MCF 10A (cell line): ENCODE measurements at regions of chr11 and their contacts with region 1.

Region 1: DNA sequence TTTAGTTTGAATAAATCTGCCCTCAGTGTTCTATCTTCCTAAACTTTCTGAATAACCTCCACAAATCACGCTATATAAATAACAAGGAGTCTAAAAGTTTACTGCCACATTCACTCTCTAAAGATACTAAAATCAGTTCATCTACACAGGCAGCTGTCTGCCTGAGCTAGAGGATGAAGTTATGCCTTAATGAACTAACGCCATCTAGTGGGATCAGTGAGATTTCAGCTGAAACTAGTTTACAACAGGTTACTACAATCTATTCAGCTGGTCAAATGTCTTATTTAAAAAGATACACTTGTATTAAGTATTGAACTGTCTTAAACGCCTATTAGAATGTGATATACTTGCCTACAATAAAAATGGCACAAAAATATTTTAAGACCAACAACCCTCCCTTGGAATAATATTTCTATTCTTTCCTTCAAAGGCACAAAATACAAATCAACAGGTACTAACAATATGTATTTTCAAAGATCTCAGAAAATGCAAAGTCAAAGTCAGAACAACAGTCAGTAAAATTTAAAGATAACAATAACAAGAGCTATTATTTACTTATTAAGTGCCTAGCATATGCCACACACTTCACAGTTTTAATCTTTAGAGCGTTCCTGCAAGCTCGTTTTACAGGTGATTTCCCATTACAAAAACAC is 84.1 kb downstream of the LARGE2 start:
- DNase-seq: peak; percentile 74
- H3K4me3 Mint-ChIP-seq: no peak overlapping the region
- H3K27ac Mint-ChIP-seq: no peak overlapping the region
- H3K4me1 Mint-ChIP-seq: peaks cover 12% of the 10 kb centered on the region
- H3K27me3 Mint-ChIP-seq: no peaks in the 10 kb centered on the region
- CTCF ChIP-seq: peak; percentile 69

Region 2: GRCh38 chr11:45872513-45873356 is 133.8 kb before region 1 on chr11:
- CTCF ChIA-PET with region 1: interaction called, 7 read pairs
- POLR2A ChIA-PET with region 1: interaction called, 4 read pairs
- intact Hi-C with region 1: loop called (anchors 1 kb)
- DNase-seq: peak; percentile 75
- H3K4me3 Mint-ChIP-seq: no peak overlapping the region
- H3K27ac Mint-ChIP-seq: no peak overlapping the region
- H3K4me1 Mint-ChIP-seq: no peaks in the 10 kb centered on the region
- H3K27me3 Mint-ChIP-seq: no peaks in the 10 kb centered on the region
- CTCF ChIP-seq: peak; percentile 76

Region 3: DNA sequence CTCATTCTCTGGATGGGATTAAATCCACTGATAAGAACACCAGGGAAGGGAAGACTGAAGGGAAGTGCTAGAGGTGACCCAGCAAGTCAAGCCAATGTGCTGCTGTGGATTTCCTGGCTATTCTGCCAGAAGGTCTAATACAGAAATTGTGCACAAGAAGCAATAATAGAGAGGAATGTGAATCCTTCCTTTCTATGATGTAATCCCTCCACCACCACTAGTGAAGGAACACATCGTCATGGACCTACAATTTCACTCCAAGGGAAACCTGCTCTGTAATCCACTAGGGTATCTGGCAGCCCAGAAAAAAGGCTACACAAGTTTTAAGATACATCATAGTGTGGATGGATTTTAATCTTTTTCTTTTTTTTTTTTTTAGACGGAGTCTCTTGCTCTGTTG is 66.7 kb before region 1 on chr11:
- CTCF ChIA-PET with region 1: no interaction called
- POLR2A ChIA-PET with region 1: no interaction called
- intact Hi-C with region 1: no loop called
- DNase-seq: no peak
- H3K4me3 Mint-ChIP-seq: no peak overlapping the region
- H3K27ac Mint-ChIP-seq: no peak overlapping the region
- H3K4me1 Mint-ChIP-seq: no peaks in the 10 kb centered on the region
- H3K27me3 Mint-ChIP-seq: no peaks in the 10 kb centered on the region
- CTCF ChIP-seq: no peak

Region 4: GRCh38 chr11:45993531-45994001 is 13.0 kb before region 1 on chr11:
- CTCF ChIA-PET with region 1: interaction called, 12 read pairs
- POLR2A ChIA-PET with region 1: interaction called, 6 read pairs
- intact Hi-C with region 1: no loop called
- DNase-seq: no peak
- H3K4me3 Mint-ChIP-seq: no peak overlapping the region
- H3K27ac Mint-ChIP-seq: no peak overlapping the region
- H3K4me1 Mint-ChIP-seq: peaks cover 12% of the 10 kb centered on the region
- H3K27me3 Mint-ChIP-seq: no peaks in the 10 kb centered on the region
- CTCF ChIP-seq: no peak